PC-9 (cell line): ENCODE measurements at regions of chr6 and their contacts with region 1.

Region 1: GRCh38 chr6:36912586-36912985 is 26.8 kb downstream of the C6orf89 start:
- DNase-seq: peak; percentile 37 to 89
- H3K4me3 ChIP-seq: no peak overlapping the region
- H3K27ac ChIP-seq: no peak overlapping the region
- H3K4me1 ChIP-seq: peaks cover 33% of the 10 kb centered on the region
- H3K27me3 ChIP-seq: no peaks in the 10 kb centered on the region
- CTCF ChIP-seq: no peak

Region 2: DNA sequence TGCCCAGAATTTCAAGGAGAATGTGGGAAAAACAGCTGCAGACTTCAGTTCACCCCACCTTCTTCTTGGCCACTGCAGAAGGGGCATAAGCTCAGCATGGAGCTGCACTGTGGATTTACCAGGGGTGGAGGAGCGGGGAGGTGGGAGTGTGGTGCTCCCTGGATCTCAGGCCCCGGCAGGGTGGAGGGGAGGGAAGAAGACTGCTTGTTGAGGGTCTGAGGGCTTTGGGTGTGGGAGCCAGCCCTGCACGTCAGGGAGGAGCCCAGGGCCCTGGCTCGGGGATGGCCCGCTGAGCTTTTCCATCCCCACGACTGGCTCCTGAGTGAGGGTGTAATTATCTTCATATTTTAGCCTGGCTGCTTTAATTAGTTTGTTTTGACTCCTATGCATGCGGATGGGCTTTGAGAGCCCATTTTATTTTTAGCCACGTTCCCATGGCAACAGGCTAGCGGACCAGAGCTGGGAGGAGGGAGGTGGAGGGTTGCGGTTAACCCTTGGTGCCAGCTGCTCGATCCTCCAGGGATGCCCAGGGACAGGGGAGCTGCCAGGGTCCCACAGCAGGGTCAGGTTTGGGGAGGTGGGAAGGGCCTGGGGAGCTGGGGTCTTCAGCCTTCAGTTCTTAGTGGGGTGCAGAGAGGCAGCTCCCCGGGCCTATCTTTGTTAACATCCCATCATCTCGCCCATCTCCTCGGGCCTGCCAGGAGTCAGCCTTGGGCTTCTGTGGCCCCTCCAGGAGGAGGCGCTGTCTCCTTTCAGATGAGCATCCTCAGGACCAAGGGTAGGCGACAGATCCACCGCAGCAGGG is 146.8 kb before region 1 on chr6:
- CTCF ChIA-PET with region 1: interaction called, 10 read pairs
- POLR2A ChIA-PET with region 1: no interaction called
- intact Hi-C with region 1: loop called (anchors 1 kb)
- DNase-seq: peak; percentile 50 to 78
- H3K4me3 ChIP-seq: no peak overlapping the region
- H3K27ac ChIP-seq: no peak overlapping the region
- H3K4me1 ChIP-seq: peaks cover 24% of the 10 kb centered on the region
- H3K27me3 ChIP-seq: no peaks in the 10 kb centered on the region
- CTCF ChIP-seq: peak; percentile 92

Region 3: DNA sequence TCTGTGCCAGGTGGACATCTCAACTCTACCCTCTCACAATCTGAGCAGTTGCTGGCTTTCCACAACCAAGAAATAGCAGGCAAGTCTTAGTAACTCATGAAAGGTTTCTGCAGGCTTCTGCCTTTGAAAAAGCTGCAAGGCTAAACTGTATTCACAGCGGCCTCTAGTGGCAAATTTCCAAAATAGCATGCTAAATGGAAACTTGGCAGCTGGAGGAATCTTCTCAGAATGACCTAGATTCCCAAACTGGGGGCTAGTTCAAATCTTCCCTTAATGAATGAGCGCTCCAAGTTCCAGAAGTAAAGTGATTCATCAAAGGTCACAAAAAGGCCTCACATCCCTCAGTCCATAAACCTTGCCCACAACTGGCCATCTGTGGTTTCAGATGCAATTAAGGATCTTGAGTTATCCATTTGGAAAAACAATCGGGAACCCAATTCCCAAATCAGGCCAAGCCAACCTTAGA is 61.4 kb before region 1 on chr6:
- CTCF ChIA-PET with region 1: interaction called, 31 read pairs
- POLR2A ChIA-PET with region 1: no interaction called
- intact Hi-C with region 1: loop called (anchors 1 kb)
- DNase-seq: peak; percentile 34 to 47
- H3K4me3 ChIP-seq: no peak overlapping the region
- H3K27ac ChIP-seq: no peak overlapping the region
- H3K4me1 ChIP-seq: peaks cover 22% of the 10 kb centered on the region
- H3K27me3 ChIP-seq: no peaks in the 10 kb centered on the region
- CTCF ChIP-seq: peak; percentile 93

Region 4: GRCh38 chr6:36929607-36930006 is 17.0 kb after region 1 on chr6:
- CTCF ChIA-PET with region 1: interaction called, 3 read pairs
- POLR2A ChIA-PET with region 1: no interaction called
- intact Hi-C with region 1: loop called (anchors 2 kb)
- DNase-seq: peak in 1 of 2 experiments; percentile 69
- H3K4me3 ChIP-seq: no peak overlapping the region
- H3K27ac ChIP-seq: peak overlapping the region; percentile 4; the same call in 1 of the 2 replicates
- H3K4me1 ChIP-seq: peaks cover 49% of the 10 kb centered on the region
- H3K27me3 ChIP-seq: no peaks in the 10 kb centered on the region
- CTCF ChIP-seq: no peak

Region 5: GRCh38 chr6:36955671-36956445 is 43.3 kb after region 1 on chr6:
- CTCF ChIA-PET with region 1: interaction called, 3 read pairs
- POLR2A ChIA-PET with region 1: interaction called, 14 read pairs
- intact Hi-C with region 1: loop called (anchors 5 kb)
- DNase-seq: peak; percentile 43 to 56
- H3K4me3 ChIP-seq: no peak overlapping the region
- H3K27ac ChIP-seq: no peak overlapping the region
- H3K4me1 ChIP-seq: peaks cover 23% of the 10 kb centered on the region
- H3K27me3 ChIP-seq: no peaks in the 10 kb centered on the region
- CTCF ChIP-seq: no peak

Region 6: DNA sequence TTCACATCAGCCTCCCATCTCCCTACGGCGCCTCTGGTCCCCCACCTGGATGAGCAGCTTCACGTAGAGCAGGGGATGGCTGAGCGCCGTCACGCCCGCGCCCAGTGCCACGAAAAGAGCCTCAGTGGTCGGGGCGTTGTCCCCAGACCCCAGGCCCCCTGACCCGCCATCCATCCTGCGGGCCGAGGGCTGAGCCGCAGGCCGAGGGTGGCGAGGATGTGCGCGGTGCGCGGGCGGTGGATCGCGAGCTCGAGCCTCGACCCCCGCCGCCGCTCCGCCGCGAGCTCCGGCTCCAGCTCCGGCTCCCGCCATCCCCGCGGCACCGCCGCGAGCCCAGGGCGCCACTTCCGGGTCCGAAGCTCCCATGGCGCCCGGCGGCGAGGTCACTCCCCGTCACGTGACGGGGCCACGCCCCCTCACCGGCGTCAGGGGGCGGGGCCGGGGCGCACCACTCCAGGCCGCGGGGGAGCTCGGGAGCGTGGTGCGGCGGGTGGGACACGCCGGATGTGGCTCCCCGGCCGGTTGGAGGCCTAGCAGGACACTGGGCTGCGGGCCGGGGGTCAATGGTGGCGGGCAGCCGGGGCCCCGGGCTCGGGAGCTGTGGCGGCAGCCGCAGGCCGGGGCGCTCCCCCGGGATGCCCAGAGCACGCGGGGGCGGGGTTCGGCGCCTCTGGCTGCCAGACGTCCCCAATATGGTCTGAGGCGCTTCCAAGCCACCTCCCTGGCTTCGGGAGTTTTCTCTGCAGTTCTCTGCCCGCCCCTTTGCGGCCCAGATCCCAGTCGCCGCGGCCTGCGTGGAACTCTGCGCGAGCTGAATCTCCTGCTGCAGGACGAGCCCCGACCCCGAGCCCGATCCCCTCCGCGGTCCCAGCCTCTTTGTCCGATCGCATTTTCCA is 73.5 kb after region 1 on chr6 and contains the start of gene MTCH1:
- CTCF ChIA-PET with region 1: interaction called, 4 read pairs
- POLR2A ChIA-PET with region 1: interaction called, 4 read pairs
- intact Hi-C with region 1: loop called (anchors 1 kb)
- DNase-seq: peak; percentile 64 to 91
- H3K4me3 ChIP-seq: peak within 1 kb of the TSS; percentile 99
- H3K27ac ChIP-seq: peak within 1 kb of the TSS; percentile 40
- H3K4me1 ChIP-seq: peaks cover 23% of the 10 kb centered on the region
- H3K27me3 ChIP-seq: no peaks in the 10 kb centered on the region
- CTCF ChIP-seq: 0 out of 2 replicates have a peak, but pooled peaks have one; percentile 3
- total RNA-seq, gene MTCH1: 236 and 241 TPM in 2 replicates

Region 7: GRCh38 chr6:37131104-37131959 is 218.7 kb after region 1 on chr6:
- CTCF ChIA-PET with region 1: interaction called, 10 read pairs
- POLR2A ChIA-PET with region 1: no interaction called
- intact Hi-C with region 1: no loop called
- DNase-seq: peak; percentile 66 to 73
- H3K4me3 ChIP-seq: peak overlapping the region; percentile 51; the same call in 1 of the 2 replicates
- H3K27ac ChIP-seq: peak overlapping the region; percentile 95
- H3K4me1 ChIP-seq: peaks cover 93% of the 10 kb centered on the region
- H3K27me3 ChIP-seq: no peaks in the 10 kb centered on the region
- CTCF ChIP-seq: no peak